Sciatic nerve (tissue), 2 donors: ENCODE measurements at regions of chr1 and their contacts with region 1.

Region 1: DNA sequence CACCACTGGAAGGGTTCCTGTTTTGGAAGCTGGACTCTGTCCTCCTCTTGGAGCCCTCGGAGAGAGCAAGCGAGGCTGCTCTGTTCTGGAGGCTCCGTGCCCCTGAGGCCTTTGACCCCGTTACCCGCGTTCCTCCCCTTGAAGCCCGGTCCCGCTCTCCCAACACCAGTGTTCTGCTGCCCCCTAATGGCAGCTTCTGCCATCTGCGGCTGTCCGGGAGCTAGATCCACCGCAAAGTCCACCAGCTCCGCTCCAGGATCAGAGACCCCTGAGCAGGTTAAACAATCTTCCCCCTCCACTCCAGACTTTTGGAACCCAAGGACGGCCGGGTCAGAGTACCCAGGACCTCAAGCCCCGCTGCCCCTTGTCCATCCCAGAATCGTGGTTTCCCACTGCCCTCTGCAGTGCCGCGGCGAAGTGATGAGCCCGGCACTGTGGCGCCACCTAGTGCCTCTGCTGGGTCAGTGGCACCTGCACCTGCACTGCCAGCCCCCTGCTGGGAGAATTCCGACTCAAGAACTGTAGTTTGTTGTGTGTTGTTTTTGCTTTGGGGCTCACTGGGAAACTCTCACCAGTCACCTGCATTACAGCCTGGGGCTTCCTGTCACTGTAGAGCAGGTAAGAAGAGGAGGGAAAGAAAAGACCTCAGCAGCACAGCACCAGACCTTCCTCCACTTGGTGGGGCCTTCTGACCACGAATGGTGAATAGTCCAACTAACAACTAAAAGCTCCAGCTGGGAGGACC is 63.5 kb upstream of the NFASC start:
- DNase-seq: peak; percentile 89
- ATAC-seq: peak; percentile 95

Region 2: DNA sequence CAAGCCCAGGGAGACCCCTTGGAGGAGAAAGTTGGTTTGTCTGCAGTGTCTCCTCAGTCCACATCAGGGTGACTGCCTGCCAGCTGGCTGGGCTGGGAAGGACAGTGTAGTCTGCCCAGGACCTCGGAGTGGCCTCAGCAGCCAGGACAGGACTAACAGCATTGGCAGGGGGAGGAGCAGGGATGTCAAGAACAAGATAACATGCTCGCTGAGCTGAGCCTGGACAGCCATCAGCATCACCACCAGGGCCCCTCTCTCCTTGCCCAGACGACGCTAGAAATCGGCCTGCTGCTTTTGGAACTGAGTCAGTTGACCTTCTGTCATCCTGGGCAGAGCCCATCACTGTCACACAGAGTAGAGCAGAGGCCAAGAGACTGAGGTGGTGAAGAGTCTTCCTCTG is 152.3 kb after region 1 on chr1:
- intact Hi-C with region 1: loop called (anchors 10 kb)
- DNase-seq: no peak
- ATAC-seq: no peak